SK-N-SH (cell line): ENCODE measurements at regions of chr2 and their contacts with region 1.

Region 1: GRCh38 chr2:85678794-85679672 is 11.0 kb upstream of the SFTPB start:
- DNase-seq: peak; percentile 92
- H3K4me3 ChIP-seq: no peak overlapping the region
- H3K27ac ChIP-seq: no peak overlapping the region
- H3K4me1 ChIP-seq: peaks cover 0 to 7% of the 10 kb centered on the region in 2 experiments; a peak in 1 of 4 replicates
- H3K27me3 ChIP-seq: no peaks in the 10 kb centered on the region
- CTCF ChIP-seq: peak; percentile 93
- EP300 ChIP-seq: no peak
- RAD21 ChIP-seq: peak; percentile 82

Region 2: DNA sequence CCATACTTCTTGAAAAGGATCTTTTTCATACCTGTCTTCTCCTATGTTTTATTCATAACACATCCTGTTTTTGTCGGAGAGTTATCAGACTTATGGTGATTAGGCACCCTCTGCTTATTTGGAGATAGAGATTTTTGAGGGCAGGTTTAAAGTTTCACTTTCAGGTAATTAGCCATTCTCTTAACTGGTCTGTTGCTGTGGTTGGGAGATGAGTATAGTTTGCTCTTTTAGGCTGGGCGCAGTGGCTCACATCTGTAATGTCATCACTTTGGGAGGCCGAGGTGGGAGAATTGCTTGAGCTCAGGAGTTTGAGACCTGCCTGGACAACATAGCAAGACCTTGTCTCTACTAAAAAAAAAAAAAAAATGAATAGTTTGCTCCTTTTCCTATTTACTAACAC is 36.3 kb before region 1 on chr2:
- CTCF ChIA-PET with region 1: interaction called, 20 read pairs
- POLR2A ChIA-PET with region 1: no interaction called
- DNase-seq: no peak
- H3K4me3 ChIP-seq: no peak overlapping the region
- H3K27ac ChIP-seq: no peak overlapping the region
- H3K4me1 ChIP-seq: no peaks in the 10 kb centered on the region
- H3K27me3 ChIP-seq: no peaks in the 10 kb centered on the region
- CTCF ChIP-seq: no peak
- EP300 ChIP-seq: no peak
- RAD21 ChIP-seq: no peak

Region 3: GRCh38 chr2:85662899-85663593 is 16.0 kb before region 1 on chr2:
- CTCF ChIA-PET with region 1: interaction called, 18 read pairs
- POLR2A ChIA-PET with region 1: no interaction called
- DNase-seq: peak; percentile 32
- H3K4me3 ChIP-seq: no peak overlapping the region
- H3K27ac ChIP-seq: no peak overlapping the region
- H3K4me1 ChIP-seq: peaks cover 0 to 2% of the 10 kb centered on the region in 2 experiments; a peak in 1 of 4 replicates
- H3K27me3 ChIP-seq: no peaks in the 10 kb centered on the region
- CTCF ChIP-seq: no peak
- EP300 ChIP-seq: no peak
- RAD21 ChIP-seq: no peak

Region 4: DNA sequence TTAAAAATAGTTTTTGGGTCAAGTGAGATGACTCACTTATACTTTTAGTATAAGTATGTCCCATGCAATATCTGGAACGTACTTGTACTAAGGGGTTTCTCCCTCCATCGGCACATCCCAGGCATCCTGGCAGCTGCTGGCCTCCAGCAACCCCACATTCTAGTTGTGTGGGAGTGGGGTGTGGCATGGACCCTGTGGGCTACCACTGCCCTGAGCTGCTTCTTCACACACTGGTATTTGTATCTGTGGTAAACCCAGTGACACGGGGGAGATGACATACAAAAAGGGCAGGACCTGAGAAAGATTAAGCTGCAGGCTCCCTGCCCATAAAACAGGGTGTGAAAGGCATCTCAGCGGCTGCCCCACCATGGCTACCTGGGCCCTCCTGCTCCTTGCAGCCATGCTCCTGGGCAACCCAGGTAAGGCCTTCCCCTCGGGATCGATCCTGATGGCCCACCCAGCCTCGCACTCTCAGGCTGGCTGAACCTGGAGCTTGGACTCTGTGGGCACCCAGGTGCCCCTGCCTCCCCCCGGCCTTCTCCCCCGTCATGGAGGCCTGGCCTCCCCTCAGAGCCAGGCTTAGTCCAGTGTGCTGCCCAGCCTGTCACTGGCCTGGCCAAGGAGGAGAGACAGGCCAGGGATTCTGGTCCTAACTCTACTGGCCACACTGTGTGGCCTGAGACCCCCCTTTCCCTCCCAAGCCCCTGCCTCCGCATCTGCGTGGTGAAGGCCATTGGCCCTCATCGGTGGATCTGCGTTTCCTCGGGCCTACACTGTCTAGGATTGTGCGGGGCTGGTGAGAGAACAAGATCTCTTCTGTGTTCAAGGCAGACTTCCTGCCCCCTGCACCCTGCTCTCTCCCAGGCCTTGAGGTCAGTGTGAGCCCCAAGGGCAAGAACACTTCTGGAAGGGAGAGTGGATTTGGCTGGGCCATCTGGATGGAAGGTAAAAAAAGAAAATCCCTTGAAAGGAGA is 15.3 kb after region 1 on chr2 and contains the start of gene GNLY:
- CTCF ChIA-PET with region 1: interaction called, 25 read pairs
- POLR2A ChIA-PET with region 1: no interaction called
- DNase-seq: no peak
- H3K4me3 ChIP-seq: no peak within 1 kb of the TSS
- H3K27ac ChIP-seq: no peak within 1 kb of the TSS
- H3K4me1 ChIP-seq: peaks cover 0 to 4% of the 10 kb centered on the region in 2 experiments; a peak in 1 of 4 replicates
- H3K27me3 ChIP-seq: no peaks in the 10 kb centered on the region
- CTCF ChIP-seq: no peak
- EP300 ChIP-seq: no peak
- RAD21 ChIP-seq: no peak
- polyA plus RNA-seq, gene GNLY: not detected in 2 replicates

Region 5: DNA sequence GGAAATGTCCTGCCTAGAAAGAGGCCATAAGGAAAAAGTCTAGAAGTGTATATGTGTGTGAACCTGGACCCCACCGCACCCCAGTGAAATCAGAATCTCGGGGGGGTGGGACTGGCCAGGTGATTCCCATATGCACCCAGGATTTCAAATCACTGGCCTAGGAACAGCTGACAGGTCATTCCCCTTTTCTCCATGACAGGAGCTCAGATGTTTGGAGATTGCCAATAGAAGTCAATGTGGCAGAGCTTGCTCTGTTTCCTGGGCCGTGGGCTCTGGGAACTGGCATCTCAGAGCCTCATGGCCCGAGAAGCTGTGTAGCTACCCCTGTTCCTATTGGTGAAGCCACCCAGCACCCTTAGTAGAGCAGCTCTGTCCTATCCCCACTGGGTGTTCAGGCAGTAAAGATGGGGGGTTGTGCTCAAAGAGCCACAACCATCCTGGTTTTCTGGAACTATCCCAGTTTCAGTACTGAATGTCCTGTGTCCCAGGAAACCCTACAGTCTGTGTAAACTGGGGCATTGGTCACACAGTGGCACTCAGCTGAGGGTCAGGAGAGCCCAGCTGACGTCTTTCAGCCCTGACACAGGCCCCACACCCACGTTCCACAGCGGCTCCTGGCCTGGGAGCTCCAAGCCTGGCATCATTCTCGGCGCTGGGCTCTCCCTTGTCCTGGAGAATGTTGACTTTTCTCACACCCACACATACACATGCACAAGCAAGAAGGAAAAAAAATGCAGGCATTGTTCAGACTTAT is 34.0 kb after region 1 on chr2:
- CTCF ChIA-PET with region 1: interaction called, 63 read pairs
- POLR2A ChIA-PET with region 1: interaction called, 4 read pairs
- DNase-seq: no peak
- H3K4me3 ChIP-seq: no peak overlapping the region
- H3K27ac ChIP-seq: no peak overlapping the region
- H3K4me1 ChIP-seq: peaks cover 9 to 16% of the 10 kb centered on the region in 2 experiments; a peak in 3 of 4 replicates
- H3K27me3 ChIP-seq: no peaks in the 10 kb centered on the region
- CTCF ChIP-seq: no peak
- EP300 ChIP-seq: no peak
- RAD21 ChIP-seq: no peak

Region 6: DNA sequence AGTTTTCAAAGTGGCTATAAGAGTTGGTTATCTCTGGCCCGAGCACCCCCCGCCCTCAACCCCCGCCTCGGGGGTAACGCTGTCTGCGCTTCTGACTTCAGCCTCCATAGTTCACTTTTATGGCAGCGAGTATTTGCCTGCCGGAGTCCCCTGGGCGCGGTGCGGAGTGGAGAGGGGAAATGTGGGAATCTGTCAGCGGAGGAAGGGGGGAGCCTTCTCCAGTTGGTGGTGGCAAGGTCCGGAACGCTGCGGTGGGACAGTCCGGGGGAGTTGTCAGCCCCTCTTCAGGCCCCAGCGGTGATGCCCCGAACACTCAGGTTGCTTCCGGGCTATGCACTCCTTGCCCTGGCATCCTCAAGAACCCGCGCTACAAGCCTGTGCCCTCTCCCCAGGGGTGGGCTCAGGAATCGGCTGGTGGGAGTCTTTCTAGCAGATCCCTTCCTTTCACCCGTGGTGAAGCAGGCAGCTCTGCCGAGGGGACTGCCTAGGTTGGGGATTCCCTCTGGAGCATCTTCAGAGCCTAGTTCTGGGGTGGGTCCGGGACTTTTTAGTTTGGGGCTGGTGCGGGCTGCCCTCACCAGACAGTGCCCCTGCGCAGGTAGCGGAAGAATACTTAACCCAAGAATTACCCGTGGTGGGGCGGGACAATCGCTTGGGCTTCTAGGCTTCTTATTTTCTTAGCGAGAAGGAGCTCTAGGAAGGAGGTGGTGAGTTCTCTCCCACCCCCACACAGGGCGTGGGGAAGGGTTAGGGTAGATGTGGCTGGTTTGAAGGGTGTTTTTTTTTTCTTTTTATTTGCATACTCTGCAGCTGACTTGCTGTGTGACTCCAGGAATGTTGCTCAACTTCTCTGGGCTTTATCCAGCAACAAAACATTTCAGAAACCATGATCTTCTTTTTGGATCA is 76.3 kb after region 1 on chr2:
- CTCF ChIA-PET with region 1: no interaction called
- POLR2A ChIA-PET with region 1: no interaction called
- DNase-seq: no peak
- H3K4me3 ChIP-seq: peak overlapping the region; percentile 56 to 79
- H3K27ac ChIP-seq: no peak overlapping the region
- H3K4me1 ChIP-seq: peaks cover 11 to 38% of the 10 kb centered on the region in 2 experiments; a peak in 2 of 4 replicates
- H3K27me3 ChIP-seq: no peaks in the 10 kb centered on the region
- CTCF ChIP-seq: no peak
- EP300 ChIP-seq: no peak
- RAD21 ChIP-seq: no peak

Region 7: GRCh38 chr2:85905187-85905666 is 226.2 kb after region 1 on chr2:
- CTCF ChIA-PET with region 1: no interaction called
- POLR2A ChIA-PET with region 1: no interaction called
- DNase-seq: no peak
- H3K4me3 ChIP-seq: no peak overlapping the region
- H3K27ac ChIP-seq: peak overlapping the region in 1 of 2 experiments; percentile 11; a peak in 1 of 4 replicates
- H3K4me1 ChIP-seq: no peaks in the 10 kb centered on the region
- H3K27me3 ChIP-seq: no peaks in the 10 kb centered on the region
- CTCF ChIP-seq: no peak
- EP300 ChIP-seq: no peak
- RAD21 ChIP-seq: no peak

Region 8: GRCh38 chr2:86062043-86062442 is 383.0 kb after region 1 on chr2:
- CTCF ChIA-PET with region 1: no interaction called
- POLR2A ChIA-PET with region 1: no interaction called
- DNase-seq: no peak
- H3K4me3 ChIP-seq: no peak overlapping the region
- H3K27ac ChIP-seq: no peak overlapping the region
- H3K4me1 ChIP-seq: peaks cover 4 to 20% of the 10 kb centered on the region in 2 experiments; a peak in 3 of 4 replicates
- H3K27me3 ChIP-seq: no peaks in the 10 kb centered on the region
- CTCF ChIP-seq: no peak
- EP300 ChIP-seq: no peak
- RAD21 ChIP-seq: no peak